ENCODE measurements at regions of chr6 and their contacts with region 1.

Region 1: GRCh38 chr6:143842902-143843676 is at the start of gene LTV1:
- DNase-seq: peak; percentile 97
- H3K4me3 Mint-ChIP-seq: peak within 1 kb of the TSS; percentile 96
- H3K27ac Mint-ChIP-seq: peak within 1 kb of the TSS; percentile 95
- H3K4me1 Mint-ChIP-seq: no peaks in the 10 kb centered on the region
- H3K27me3 Mint-ChIP-seq: no peaks in the 10 kb centered on the region
- CTCF ChIP-seq: no peak
- total RNA-seq, gene LTV1: 40.4 and 47.4 TPM in 2 replicates

Region 2: DNA sequence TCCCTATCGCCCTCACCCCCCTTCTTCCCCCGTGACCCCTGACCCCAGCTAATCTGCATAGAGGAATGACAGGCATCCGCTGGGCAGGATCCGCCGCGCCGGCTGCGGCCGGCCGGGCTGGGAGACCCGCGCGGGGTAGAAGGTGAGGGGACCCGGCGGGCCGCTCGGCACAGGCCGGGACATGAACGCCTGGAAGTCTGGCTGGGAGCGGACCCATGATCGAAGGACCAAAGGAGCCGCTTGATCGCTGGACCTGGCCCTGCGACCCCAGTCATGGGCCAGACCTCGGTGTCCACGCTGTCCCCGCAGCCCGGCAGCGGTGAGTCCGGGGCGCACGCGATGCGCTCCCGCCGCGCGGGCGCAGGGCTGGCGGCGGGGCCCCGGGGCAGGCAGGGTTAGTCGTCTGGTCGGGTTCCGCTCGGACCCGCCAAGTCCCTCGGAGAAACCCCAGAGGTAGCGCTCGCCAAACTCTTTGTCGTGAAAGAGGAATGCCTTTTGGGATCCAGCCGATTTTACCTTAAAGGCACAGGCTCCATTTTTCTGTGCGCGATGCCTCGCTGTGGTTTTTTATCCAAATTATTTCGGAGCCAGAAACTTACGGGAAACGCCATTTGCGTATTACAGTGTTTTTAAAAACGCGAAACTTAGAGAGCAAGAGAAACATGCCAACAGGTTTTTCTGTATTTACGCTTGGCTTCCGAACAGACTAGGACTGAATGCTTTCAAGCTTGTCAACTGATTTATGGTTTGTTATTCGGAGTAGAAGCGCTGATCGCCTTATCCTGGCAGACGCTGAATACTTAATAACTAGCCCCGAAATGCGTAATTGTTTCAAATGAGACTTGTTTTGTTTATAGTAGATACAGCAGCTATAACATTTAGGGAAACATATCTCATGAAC is 164.9 kb before region 1 on chr6 and contains the start of gene PHACTR2:
- CTCF ChIA-PET with region 1: no interaction called
- POLR2A ChIA-PET with region 1: interaction called, 48 read pairs
- intact Hi-C with region 1: loop called (anchors 2 kb)
- DNase-seq: peak; percentile 75
- H3K4me3 Mint-ChIP-seq: peak within 1 kb of the TSS; percentile 88
- H3K27ac Mint-ChIP-seq: peak within 1 kb of the TSS; percentile 87
- H3K4me1 Mint-ChIP-seq: peaks cover 51% of the 10 kb centered on the region
- H3K27me3 Mint-ChIP-seq: no peaks in the 10 kb centered on the region
- CTCF ChIP-seq: no peak
- total RNA-seq, gene PHACTR2: 30.0 and 34.4 TPM in 2 replicates

Region 3: GRCh38 chr6:144008120-144008811 is 165.2 kb after region 1 on chr6 and contains the start of gene PLAGL1:
- CTCF ChIA-PET with region 1: interaction called, 5 read pairs
- POLR2A ChIA-PET with region 1: interaction called, 5 read pairs
- intact Hi-C with region 1: loop called (anchors 10 kb)
- DNase-seq: peak; percentile 64
- H3K4me3 Mint-ChIP-seq: peak within 1 kb of the TSS; percentile 84
- H3K27ac Mint-ChIP-seq: peak within 1 kb of the TSS; percentile 90
- H3K4me1 Mint-ChIP-seq: no peaks in the 10 kb centered on the region
- H3K27me3 Mint-ChIP-seq: no peaks in the 10 kb centered on the region
- CTCF ChIP-seq: no peak
- total RNA-seq, gene PLAGL1: 46.4 and 52.1 TPM in 2 replicates

Region 4: GRCh38 chr6:144095331-144096002 is 252.4 kb after region 1 on chr6 and contains the start of gene SF3B5:
- CTCF ChIA-PET with region 1: no interaction called
- POLR2A ChIA-PET with region 1: interaction called, 10 read pairs
- intact Hi-C with region 1: no loop called
- DNase-seq: peak; percentile 100
- H3K4me3 Mint-ChIP-seq: peak within 1 kb of the TSS; percentile 96
- H3K27ac Mint-ChIP-seq: peak within 1 kb of the TSS; percentile 96
- H3K4me1 Mint-ChIP-seq: peaks cover 15% of the 10 kb centered on the region
- H3K27me3 Mint-ChIP-seq: no peaks in the 10 kb centered on the region
- CTCF ChIP-seq: no peak
- total RNA-seq, gene SF3B5: 211 and 298 TPM in 2 replicates

Measured in MCF 10A (cell line).